RWPE1 (cell line): ENCODE measurements at regions of chr6 and their contacts with region 1.

Region 1: DNA sequence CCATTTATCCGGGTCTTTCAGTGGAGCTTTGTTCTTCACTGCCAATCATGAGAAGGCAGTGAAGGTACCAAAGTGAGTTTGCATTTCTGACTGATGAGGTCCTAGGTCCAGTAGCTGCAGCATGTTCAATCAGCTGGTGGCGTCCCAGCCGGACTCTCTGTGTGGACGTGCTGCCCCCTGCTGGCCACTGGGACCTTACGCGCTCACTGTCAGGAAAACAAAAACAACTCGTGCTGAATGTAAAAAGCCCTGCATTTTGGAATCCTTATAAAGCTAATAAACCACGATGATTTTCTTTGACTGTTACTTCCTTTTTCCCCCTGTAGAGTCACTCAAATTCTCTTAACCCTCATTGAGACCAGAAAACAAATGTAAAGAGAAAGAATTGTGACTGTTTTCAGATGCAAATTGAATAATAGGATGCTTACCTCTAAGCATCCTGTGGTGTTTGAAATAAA is 4.9 kb upstream of the CD24 start:
- DNase-seq: peak; percentile 78
- H3K27ac ChIP-seq: no peak overlapping the region
- CTCF ChIP-seq: peak; percentile 94

Region 2: DNA sequence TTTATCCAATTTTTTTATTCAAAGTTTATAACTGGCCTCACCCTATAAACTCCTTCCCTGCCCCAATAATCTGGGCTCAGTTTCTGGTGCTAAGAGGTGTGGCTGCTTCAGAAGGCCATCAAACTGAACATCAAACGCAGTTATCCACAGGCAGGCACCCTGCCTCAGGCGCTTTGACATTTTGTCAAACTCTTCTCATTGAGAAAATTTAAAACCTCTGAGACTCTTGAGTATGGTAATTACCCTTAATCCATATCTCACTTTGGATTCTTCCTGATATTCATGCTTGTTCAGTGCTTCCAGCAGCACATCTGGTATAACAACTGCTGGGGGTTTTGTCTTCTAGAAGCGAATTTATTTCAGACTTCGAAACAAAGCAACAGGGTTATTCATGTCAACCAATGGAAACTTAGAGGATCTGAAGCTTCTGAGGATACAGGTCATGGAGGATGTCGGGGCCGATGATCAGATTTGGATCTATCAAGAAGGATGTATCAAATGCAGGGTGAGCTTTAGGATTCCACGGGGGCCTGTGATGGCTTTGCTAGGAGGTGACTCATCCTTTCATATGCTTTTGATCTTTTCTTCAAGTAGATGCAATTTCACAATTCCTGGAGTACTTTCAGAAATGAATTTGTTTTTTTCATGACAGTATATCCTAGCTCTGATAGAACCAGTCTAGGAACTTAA is 418.3 kb before region 1 on chr6:
- CTCF ChIA-PET with region 1: interaction called, 11 read pairs
- POLR2A ChIA-PET with region 1: no interaction called
- DNase-seq: peak; percentile 61
- H3K27ac ChIP-seq: no peak overlapping the region
- CTCF ChIP-seq: no peak

Region 3: GRCh38 chr6:106608062-106608668 is 371.3 kb before region 1 on chr6:
- CTCF ChIA-PET with region 1: interaction called, 22 read pairs
- POLR2A ChIA-PET with region 1: no interaction called
- DNase-seq: peak; percentile 41
- H3K27ac ChIP-seq: no peak overlapping the region
- CTCF ChIP-seq: peak; percentile 42

Region 4: GRCh38 chr6:106702451-106703110 is 276.9 kb before region 1 on chr6:
- CTCF ChIA-PET with region 1: no interaction called
- POLR2A ChIA-PET with region 1: no interaction called
- DNase-seq: no peak
- H3K27ac ChIP-seq: no peak overlapping the region
- CTCF ChIP-seq: no peak